Left lung (tissue), 14 donors: ENCODE measurements at regions of chr16 and their contacts with region 1.

Region 1: GRCh38 chr16:70679666-70680494 is 6.0 kb downstream of the MTSS2 start:
- DNase-seq: peak in 1 of 4 donors; percentile 76
- ATAC-seq: no peak
- H3K4me3 ChIP-seq: no peak overlapping the region
- H3K27ac ChIP-seq: no peak overlapping the region
- H3K4me1 ChIP-seq: peaks cover 16 to 41% of the 10 kb centered on the region in 2 donors
- H3K27me3 ChIP-seq: peaks cover 0 to 7% of the 10 kb centered on the region in 2 donors
- CTCF ChIP-seq: peak; percentile 20 to 28

Region 2: GRCh38 chr16:70770626-70771552 is 91.0 kb after region 1 on chr16:
- intact Hi-C with region 1: loop called in 1 of 2 experiments (anchors 5 kb)
- DNase-seq: peak in 2 of 4 donors; percentile 48 to 79
- ATAC-seq: peak; percentile 90
- H3K4me3 ChIP-seq: no peak overlapping the region
- H3K27ac ChIP-seq: no peak overlapping the region
- H3K4me1 ChIP-seq: no peaks in the 10 kb centered on the region
- H3K27me3 ChIP-seq: no peaks in the 10 kb centered on the region
- CTCF ChIP-seq: peak; percentile 89 to 98